ENCODE measurements at regions of chr2 and their contacts with region 1.

Region 1: DNA sequence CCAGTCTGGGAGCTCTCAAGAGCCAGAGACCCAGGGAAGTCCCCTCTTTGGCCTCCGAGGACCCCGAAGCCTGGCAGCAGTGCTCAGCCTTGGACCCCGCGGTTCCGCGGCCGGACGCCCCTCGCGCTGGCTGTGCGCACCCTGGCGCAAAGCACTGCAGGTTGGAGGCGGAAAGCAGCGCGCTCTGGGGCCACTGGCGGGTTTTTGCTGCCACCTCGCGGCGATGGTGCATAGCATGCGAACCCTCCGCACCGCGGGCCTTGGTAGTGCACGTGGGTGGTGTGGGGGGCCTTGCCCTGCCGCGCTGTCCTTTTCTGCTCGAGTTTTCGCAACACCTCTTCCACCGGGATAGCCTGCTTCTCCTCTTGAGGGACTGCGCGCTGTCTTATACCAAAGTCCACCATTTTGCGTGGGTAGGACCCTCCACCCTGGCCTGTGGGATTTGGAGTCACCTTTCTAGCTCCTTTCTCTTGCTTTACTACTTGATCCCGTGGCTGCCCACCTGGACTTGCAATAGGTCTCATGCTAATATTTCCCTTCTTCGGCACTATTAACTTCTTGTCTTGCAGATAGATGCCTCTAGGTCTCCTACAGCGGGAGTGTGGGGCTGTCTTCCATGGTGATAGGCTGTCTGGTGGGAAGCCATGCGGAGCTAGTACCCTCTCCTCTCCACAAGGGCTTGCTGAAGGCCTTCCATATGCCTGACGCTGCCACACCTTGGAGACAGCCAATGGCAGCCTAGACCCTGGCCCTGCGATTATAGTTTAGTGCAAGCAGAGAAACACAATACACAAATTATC is 14.3 kb downstream of the SIX3 start:
- H3K4me3 ChIP-seq: peak overlapping the region; percentile 26
- H3K27ac ChIP-seq: no peak overlapping the region
- H3K4me1 ChIP-seq: peaks cover 3% of the 10 kb centered on the region; the same call in 1 of the 2 replicates
- CTCF ChIP-seq: peak; percentile 97

Region 2: DNA sequence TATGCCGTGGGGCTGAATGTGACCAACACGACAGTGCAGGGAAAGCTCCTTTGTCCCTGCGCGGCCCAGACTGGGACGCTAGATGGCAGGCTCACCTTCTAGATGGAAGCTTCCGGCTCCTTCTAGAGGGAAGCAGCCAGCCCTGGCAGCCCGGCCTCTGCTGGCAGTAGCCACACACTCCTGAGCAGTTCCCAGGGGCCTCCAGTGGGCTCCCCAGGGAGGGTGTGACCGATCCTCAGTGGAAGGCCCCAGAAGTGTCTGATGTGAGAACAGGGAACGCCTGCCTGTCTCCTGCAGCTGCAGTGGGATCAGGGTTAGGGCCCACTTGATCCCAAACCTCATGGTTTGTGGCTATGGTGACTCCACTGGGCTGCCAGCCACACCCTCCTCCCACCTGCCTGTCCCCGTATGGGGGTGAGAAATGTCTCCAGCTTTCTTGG is 911.5 kb before region 1 on chr2:
- CTCF ChIA-PET with region 1: interaction called, 18 read pairs
- POLR2A ChIA-PET with region 1: no interaction called
- H3K4me3 ChIP-seq: no peak overlapping the region
- H3K27ac ChIP-seq: no peak overlapping the region
- H3K4me1 ChIP-seq: no peaks in the 10 kb centered on the region
- CTCF ChIP-seq: peak; percentile 95

Region 3: GRCh38 chr2:44392338-44392943 is 563.4 kb before region 1 on chr2:
- CTCF ChIA-PET with region 1: interaction called, 59 read pairs
- POLR2A ChIA-PET with region 1: no interaction called
- H3K4me3 ChIP-seq: no peak overlapping the region
- H3K27ac ChIP-seq: no peak overlapping the region
- H3K4me1 ChIP-seq: no peaks in the 10 kb centered on the region
- CTCF ChIP-seq: no peak

Region 4: DNA sequence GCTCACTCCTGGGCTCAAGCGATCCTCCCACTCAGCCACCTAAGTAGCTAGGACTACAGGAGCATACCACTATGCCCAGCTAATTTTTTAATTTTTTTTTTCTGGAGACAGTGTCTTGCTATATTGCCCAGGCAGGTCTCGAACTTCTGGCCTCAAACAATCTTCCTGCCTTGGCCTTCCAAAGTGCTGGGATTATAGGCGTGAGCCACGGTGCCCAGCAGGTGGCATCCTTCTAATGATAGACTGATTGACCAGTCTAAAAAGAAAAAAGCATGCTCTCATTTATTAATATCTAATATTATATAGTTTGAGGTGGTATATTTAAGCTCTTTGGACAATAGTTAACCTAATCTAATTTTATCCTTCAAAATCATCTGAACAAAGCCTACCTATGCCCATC is 395.4 kb before region 1 on chr2:
- CTCF ChIA-PET with region 1: interaction called, 19 read pairs
- POLR2A ChIA-PET with region 1: no interaction called
- H3K4me3 ChIP-seq: no peak overlapping the region
- H3K27ac ChIP-seq: no peak overlapping the region
- H3K4me1 ChIP-seq: no peaks in the 10 kb centered on the region
- CTCF ChIP-seq: no peak

Region 5: GRCh38 chr2:44974064-44974715 is 18.4 kb after region 1 on chr2:
- CTCF ChIA-PET with region 1: interaction called, 24 read pairs
- POLR2A ChIA-PET with region 1: no interaction called
- H3K4me3 ChIP-seq: no peak overlapping the region
- H3K27ac ChIP-seq: no peak overlapping the region
- H3K4me1 ChIP-seq: no peaks in the 10 kb centered on the region
- CTCF ChIP-seq: 0 out of 2 replicates have a peak, but pooled peaks have one; percentile 12

Measured in HEK293 (cell line).